ENCODE measurements at regions of chr17 and their contacts with region 1.

Region 1: GRCh38 chr17:48944519-48945260 is at the start of gene SNF8:
- DNase-seq: peak; percentile 40 to 96
- H3K4me3 ChIP-seq: peak within 1 kb of the TSS; percentile 65 to 72
- H3K27ac ChIP-seq: peak within 1 kb of the TSS; percentile 85 to 94
- H3K4me1 ChIP-seq: peaks cover 0 to 20% of the 10 kb centered on the region in 2 donors
- H3K27me3 ChIP-seq: no peaks in the 10 kb centered on the region
- CTCF ChIP-seq: no peak
- total RNA-seq, gene SNF8: 36.5 TPM

Region 2: DNA sequence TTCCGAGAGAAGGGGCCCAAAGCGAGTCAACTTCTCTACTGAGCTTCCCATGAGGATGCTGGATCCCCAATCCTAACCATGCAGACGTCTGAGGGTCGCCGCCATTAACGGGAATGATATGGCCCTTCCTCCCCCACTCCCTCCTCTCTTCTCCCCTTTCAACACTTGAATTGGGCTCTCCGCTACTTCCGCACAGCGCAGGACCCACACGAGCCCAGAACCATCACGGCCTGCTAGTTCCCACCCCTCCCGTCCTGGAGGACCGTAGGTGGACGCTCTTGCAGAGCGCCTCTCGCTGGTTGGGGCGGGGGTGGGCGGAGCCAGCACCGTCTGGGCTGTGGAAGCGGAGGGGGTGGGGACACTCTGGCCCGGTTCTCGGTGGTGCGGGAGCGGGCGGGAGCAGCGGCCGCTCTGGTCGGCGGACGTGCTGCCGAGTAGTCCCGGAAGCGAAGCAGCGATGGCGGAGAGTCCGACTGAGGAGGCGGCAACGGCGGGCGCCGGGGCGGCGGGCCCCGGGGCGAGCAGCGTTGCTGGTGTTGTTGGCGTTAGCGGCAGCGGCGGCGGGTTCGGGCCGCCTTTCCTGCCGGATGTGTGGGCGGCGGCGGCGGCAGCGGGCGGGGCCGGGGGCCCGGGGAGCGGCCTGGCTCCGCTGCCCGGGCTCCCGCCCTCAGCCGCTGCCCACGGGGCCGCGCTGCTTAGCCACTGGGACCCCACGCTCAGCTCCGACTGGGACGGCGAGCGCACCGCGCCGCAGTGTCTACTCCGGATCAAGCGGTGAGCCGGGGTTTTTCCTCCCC is 36.4 kb before region 1 on chr17 and contains the start of gene UBE2Z:
- intact Hi-C with region 1: loop called (anchors 2 kb)
- DNase-seq: peak; percentile 79 to 97
- H3K4me3 ChIP-seq: peak within 1 kb of the TSS; percentile 75 to 99
- H3K27ac ChIP-seq: peak within 1 kb of the TSS; percentile 86 to 96
- H3K4me1 ChIP-seq: peaks cover 0 to 24% of the 10 kb centered on the region in 2 donors
- H3K27me3 ChIP-seq: no peaks in the 10 kb centered on the region
- CTCF ChIP-seq: peak in 2 of 3 experiments; percentile 19 to 44
- total RNA-seq, gene UBE2Z: 68.8 TPM

Region 3: GRCh38 chr17:49132317-49132698 is 187.6 kb after region 1 on chr17:
- intact Hi-C with region 1: no loop called
- DNase-seq: no peak
- H3K4me3 ChIP-seq: peak overlapping the region; percentile 34 to 39
- H3K27ac ChIP-seq: no peak overlapping the region
- H3K4me1 ChIP-seq: no peaks in the 10 kb centered on the region
- H3K27me3 ChIP-seq: peaks cover 10% of the 10 kb centered on the region
- CTCF ChIP-seq: no peak